Naive thymus-derived CD4-positive, alpha-beta T cell (primary cell): ENCODE measurements at regions of chr19 and their contacts with region 1.

Region 1: DNA sequence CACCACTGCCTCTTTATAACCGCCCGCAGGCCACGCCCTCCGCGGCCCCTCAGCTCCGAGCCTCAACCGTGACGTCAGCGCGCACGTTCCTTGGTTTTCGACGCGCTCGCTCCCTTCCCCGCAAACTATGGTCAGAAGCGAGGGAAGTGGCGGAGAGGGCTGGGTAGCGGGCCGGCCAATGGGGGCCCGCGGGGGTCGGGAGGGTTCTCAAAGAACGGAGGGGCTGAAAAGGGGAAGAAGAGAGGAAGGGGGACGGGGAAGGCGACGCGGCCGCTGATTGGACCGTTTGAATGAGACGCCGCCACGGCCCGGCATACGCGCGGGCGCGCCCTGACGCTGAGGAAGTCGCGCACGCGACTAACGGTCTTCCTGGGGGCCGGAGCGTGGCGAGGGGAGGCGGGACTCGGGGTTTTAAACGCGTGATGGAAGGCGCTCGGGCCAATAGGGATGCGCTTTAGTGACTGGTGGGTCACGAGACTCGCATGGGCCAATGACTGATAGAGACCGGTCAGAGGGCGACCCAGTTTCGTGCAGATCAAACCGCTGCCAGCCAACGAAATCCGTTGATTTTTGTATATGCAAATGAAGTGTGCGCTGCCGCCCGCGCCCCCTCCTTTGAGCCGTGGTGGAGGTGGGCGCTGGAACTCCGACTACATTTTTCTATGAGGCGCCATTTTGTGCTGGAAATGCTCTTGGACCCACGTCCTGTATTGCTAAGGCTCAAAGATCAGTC is 378 bp upstream of the UBE2S start:
- DNase-seq: peak; percentile 94 to 99 (median 97)
- ATAC-seq: peak; percentile 93
- H3K4me3 ChIP-seq: peak overlapping the region; percentile 89
- H3K4me3 Mint-ChIP-seq: peak overlapping the region; percentile 86 to 97 (median 92)
- H3K27ac ChIP-seq: peak overlapping the region; percentile 96
- H3K27ac Mint-ChIP-seq: peak overlapping the region; percentile 93 to 100 (median 99)
- H3K4me1 ChIP-seq: peaks cover 17 to 24% of the 10 kb centered on the region in 2 donors
- H3K4me1 Mint-ChIP-seq: peaks cover 21 to 36% (median 26%) of the 10 kb centered on the region in 7 donors
- H3K27me3 ChIP-seq: no peaks in the 10 kb centered on the region
- H3K27me3 Mint-ChIP-seq: peaks cover 0 to 12% (median 0%) of the 10 kb centered on the region in 5 donors

Region 2: GRCh38 chr19:55062734-55063492 is 345.1 kb before region 1 on chr19 and contains the start of gene RDH13:
- CTCF ChIA-PET with region 1: no interaction called
- POLR2A ChIA-PET with region 1: no interaction called
- intact Hi-C with region 1: loop called in 1 of 2 experiments (anchors 5 kb)
- DNase-seq: peak; percentile 95 to 99 (median 97)
- ATAC-seq: peak; percentile 100
- H3K4me3 ChIP-seq: peak within 1 kb of the TSS; percentile 74
- H3K4me3 Mint-ChIP-seq: peak within 1 kb of the TSS; percentile 65 to 94 (median 86)
- H3K27ac ChIP-seq: peak within 1 kb of the TSS; percentile 78
- H3K27ac Mint-ChIP-seq: peak within 1 kb of the TSS; percentile 31 to 88 (median 77)
- H3K4me1 ChIP-seq: peaks cover 7 to 10% of the 10 kb centered on the region in 2 donors
- H3K4me1 Mint-ChIP-seq: peaks cover 0 to 33% (median 18%) of the 10 kb centered on the region in 7 donors
- H3K27me3 ChIP-seq: peaks cover 0 to 9% of the 10 kb centered on the region in 2 donors
- H3K27me3 Mint-ChIP-seq: peaks cover 19 to 36% (median 22%) of the 10 kb centered on the region in 5 donors
- total RNA-seq, gene RDH13: 14.5 to 24.8 (median 19.0) TPM

Region 3: DNA sequence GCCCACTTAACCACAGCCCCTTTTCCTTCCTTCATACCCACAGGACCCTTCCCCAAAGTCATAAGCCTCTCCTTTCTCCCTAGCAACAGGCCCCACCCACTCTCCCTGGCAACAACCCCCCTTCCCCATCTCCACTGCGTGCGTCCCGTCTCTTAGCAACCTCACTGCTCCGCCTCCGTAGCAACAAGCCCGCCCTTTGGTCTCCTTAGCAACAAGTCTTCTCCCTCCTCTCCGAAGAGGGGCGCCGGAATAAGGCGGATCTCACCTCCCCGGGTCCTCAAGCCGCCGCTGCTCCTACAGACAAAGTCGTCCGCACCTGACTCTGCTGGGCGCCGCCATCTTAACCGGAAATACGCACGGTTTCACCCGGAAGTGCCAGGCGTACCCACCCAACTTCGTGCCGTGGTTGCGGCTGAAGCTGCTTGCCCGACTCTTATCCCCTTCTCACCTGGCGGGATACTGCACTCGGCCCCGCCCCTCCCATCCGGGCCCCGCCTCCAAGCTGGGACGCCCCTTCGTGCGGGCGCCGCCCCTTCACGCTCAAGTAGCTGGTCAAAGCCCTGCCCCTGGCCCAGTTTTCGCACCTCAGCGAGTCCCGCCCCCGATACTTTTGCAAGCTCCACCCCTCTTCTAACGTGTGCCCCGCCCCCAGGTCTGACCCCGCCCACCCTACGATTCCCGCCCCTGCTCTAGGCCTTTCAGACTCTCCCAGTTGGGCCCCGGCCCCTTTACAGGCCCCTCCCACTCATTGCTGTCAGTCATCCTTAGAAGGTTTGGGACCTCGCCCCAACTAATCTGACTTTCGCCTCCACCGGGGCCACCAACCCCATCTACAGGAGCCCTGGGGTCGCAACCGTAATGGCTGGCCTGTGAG is 128.0 kb before region 1 on chr19 and contains the start of gene HSPBP1:
- CTCF ChIA-PET with region 1: no interaction called
- POLR2A ChIA-PET with region 1: interaction called, 7 read pairs
- intact Hi-C with region 1: loop called (anchors 1 kb)
- DNase-seq: peak; percentile 88 to 96 (median 96)
- ATAC-seq: peak; percentile 92
- H3K4me3 ChIP-seq: peak within 1 kb of the TSS; percentile 91
- H3K4me3 Mint-ChIP-seq: peak within 1 kb of the TSS; percentile 92 to 100 (median 98)
- H3K27ac ChIP-seq: peak within 1 kb of the TSS; percentile 89
- H3K27ac Mint-ChIP-seq: peak within 1 kb of the TSS; percentile 91 to 100 (median 98)
- H3K4me1 ChIP-seq: peaks cover 6 to 32% of the 10 kb centered on the region in 2 donors
- H3K4me1 Mint-ChIP-seq: peaks cover 12 to 52% (median 39%) of the 10 kb centered on the region in 7 donors
- H3K27me3 ChIP-seq: no peaks in the 10 kb centered on the region
- H3K27me3 Mint-ChIP-seq: peaks cover 0 to 9% (median 0%) of the 10 kb centered on the region in 5 donors
- total RNA-seq, gene HSPBP1: 15.0 to 30.0 (median 16.0) TPM

Region 4: GRCh38 chr19:55385740-55386529 is 22.0 kb before region 1 on chr19 and contains the start of gene RPL28:
- CTCF ChIA-PET with region 1: no interaction called
- POLR2A ChIA-PET with region 1: interaction called, 82 read pairs
- intact Hi-C with region 1: loop called (anchors 1 kb)
- DNase-seq: peak; percentile 92 to 99 (median 99)
- ATAC-seq: peak; percentile 89
- H3K4me3 ChIP-seq: peak within 1 kb of the TSS; percentile 92
- H3K4me3 Mint-ChIP-seq: peak within 1 kb of the TSS; percentile 94 to 100 (median 100)
- H3K27ac ChIP-seq: peak within 1 kb of the TSS; percentile 91
- H3K27ac Mint-ChIP-seq: peak within 1 kb of the TSS; percentile 91 to 100 (median 99)
- H3K4me1 ChIP-seq: peaks cover 45 to 53% of the 10 kb centered on the region in 2 donors
- H3K4me1 Mint-ChIP-seq: peaks cover 41 to 79% (median 70%) of the 10 kb centered on the region in 7 donors
- H3K27me3 ChIP-seq: no peaks in the 10 kb centered on the region
- H3K27me3 Mint-ChIP-seq: peaks cover 0 to 3% (median 0%) of the 10 kb centered on the region in 5 donors
- total RNA-seq, gene RPL28: 2,549 to 3,799 (median 3,242) TPM

Region 5: GRCh38 chr19:55605207-55605636 is 197.3 kb after region 1 on chr19:
- CTCF ChIA-PET with region 1: no interaction called
- POLR2A ChIA-PET with region 1: no interaction called
- intact Hi-C with region 1: loop called in 1 of 2 experiments (anchors 1 kb)
- DNase-seq: peak; percentile 90 to 99 (median 97)
- ATAC-seq: peak; percentile 87
- H3K4me3 ChIP-seq: peak overlapping the region; percentile 51
- H3K4me3 Mint-ChIP-seq: peak overlapping the region; percentile 78 to 98 (median 90)
- H3K27ac ChIP-seq: peak overlapping the region; percentile 90
- H3K27ac Mint-ChIP-seq: peak overlapping the region; percentile 77 to 96 (median 91)
- H3K4me1 ChIP-seq: peaks cover 7 to 18% of the 10 kb centered on the region in 2 donors
- H3K4me1 Mint-ChIP-seq: peaks cover 37 to 70% (median 64%) of the 10 kb centered on the region in 7 donors
- H3K27me3 ChIP-seq: no peaks in the 10 kb centered on the region
- H3K27me3 Mint-ChIP-seq: peaks cover 0 to 3% (median 0%) of the 10 kb centered on the region in 5 donors